ENCODE measurements at regions of chr1 and their contacts with region 1.

Region 1: DNA sequence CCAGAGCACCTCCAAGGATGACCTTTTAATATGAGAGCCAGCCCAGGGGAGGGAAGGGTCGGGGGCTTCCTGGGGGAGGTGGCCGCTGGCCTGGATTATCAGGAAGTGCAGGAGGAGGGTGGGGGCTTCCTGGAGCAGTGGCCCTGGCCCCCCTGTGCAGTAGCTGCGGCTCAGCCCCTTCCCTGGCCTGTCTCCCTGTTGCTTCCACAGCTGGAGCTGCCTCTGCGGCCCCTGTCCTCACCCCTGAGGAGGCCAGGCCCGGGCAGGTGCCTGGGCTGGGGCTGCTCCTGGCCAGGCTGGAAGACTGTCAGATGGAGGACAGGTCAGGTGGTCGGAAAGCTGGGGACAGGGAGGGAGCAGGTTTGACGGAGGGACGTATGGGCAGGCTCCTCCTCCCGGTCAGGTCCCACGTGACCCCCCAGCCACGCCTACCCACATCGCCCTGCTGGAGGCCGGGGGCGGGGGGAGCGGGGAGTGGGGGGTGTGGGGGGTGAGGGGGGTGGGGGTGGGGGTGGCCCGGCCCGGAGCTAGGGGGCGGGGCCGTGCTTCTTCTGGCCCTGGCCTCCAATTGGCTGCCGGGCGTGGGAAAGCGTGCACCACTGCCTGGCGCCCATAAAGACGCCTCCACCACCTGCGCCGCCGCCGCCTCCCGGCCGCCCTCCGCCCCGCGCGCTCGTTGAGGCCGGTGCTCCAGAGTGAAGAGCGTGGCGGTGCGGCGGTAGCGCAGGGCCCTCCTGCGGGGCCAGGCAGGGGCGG is 10.2 kb upstream of the TNFRSF14 start:
- DNase-seq: peak; percentile 91
- H3K4me3 Mint-ChIP-seq: peak overlapping the region; percentile 80
- H3K27ac Mint-ChIP-seq: peak overlapping the region; percentile 99
- H3K4me1 Mint-ChIP-seq: peaks cover 18% of the 10 kb centered on the region
- H3K27me3 Mint-ChIP-seq: no peaks in the 10 kb centered on the region

Region 2: GRCh38 chr1:2300851-2301606 is 244.9 kb before region 1 on chr1:
- CTCF ChIA-PET with region 1: no interaction called
- POLR2A ChIA-PET with region 1: no interaction called
- intact Hi-C with region 1: loop called (anchors 5 kb)
- DNase-seq: peak; percentile 95
- H3K4me3 Mint-ChIP-seq: peak overlapping the region; percentile 75
- H3K27ac Mint-ChIP-seq: peak overlapping the region; percentile 98
- H3K4me1 Mint-ChIP-seq: peaks cover 53% of the 10 kb centered on the region
- H3K27me3 Mint-ChIP-seq: no peaks in the 10 kb centered on the region

Region 3: DNA sequence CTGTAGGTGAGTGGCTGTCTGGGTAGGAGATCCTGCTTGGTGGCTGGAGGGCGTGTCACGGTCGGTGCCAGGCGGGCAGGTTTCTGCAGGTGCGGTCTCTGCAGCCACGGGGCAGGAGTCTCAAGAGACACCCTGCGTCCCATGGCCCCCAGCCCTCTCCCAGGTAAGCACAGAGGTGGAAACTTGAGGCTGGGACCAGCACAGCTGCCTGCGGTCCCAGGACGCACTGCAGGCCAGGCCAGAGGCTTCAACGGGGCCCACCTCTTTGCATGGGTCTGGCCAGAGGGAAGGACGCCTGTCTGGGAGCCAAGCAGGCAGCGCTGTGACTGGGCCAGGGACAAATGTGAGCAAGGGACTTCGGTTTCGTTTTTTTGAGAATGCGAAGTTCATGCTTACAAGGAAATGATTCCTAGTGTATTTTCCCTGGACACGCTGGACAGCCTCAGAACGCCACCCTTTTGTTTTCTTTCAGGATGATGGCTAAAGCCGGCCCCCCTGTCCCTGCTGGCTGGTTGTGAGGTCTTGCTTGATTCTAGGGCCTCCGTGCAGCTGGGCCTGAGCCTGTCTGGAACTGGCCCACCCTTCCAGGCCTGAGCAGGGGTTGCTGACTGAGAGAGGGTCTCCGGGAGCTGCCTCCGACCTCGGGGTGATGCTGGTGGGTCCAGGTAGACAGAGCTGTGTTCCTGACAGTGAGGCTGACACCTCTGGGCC is 192.9 kb before region 1 on chr1:
- CTCF ChIA-PET with region 1: no interaction called
- POLR2A ChIA-PET with region 1: no interaction called
- intact Hi-C with region 1: no loop called
- DNase-seq: no peak
- H3K4me3 Mint-ChIP-seq: no peak overlapping the region
- H3K27ac Mint-ChIP-seq: no peak overlapping the region
- H3K4me1 Mint-ChIP-seq: no peaks in the 10 kb centered on the region
- H3K27me3 Mint-ChIP-seq: no peaks in the 10 kb centered on the region

Region 4: DNA sequence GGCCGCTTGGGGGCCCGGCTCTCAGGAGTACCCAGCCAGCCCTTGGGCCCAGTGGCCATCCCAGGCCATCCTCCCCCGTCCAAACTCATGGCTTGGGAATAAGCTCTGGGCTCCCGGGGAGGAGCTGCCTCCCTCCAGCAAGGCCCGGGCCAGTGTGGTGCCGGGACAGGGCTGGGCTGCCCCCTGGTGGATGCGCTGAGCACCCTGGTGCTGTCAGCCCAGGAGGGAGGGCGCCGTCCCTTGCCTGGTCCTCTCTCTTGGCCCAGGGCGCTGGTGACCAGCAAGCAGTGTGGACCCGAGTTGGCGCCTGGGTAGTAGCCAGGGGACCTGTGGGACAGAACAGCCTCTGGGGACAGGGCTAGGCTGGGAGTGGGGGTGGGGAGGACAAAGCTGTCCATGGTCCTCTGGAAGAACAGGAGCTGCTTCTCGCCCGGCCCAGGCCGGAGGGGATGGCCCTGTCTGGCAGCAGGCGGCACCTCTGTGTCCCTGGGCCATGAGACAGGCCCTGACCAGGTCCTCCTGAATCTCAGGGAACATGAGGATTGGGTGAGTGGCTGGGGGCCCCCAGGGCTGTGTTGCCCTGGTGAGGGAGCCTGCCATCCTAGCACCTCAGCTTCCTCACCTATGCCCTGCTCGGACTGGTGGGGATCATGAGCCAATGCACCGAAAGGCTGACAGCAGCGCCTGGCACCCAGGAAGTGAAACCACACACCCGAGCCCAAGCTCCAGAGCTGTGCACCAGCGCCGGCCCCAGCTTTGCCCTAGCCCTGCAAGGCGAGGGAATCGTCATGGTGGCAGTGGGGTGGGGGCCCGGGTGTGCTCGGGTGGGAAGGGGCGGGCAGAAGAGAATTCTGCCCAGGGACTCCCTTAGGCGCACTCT is 164.0 kb before region 1 on chr1:
- CTCF ChIA-PET with region 1: no interaction called
- POLR2A ChIA-PET with region 1: no interaction called
- intact Hi-C with region 1: no loop called
- DNase-seq: peak; percentile 85
- H3K4me3 Mint-ChIP-seq: no peak overlapping the region
- H3K27ac Mint-ChIP-seq: no peak overlapping the region
- H3K4me1 Mint-ChIP-seq: no peaks in the 10 kb centered on the region
- H3K27me3 Mint-ChIP-seq: no peaks in the 10 kb centered on the region

Region 5: DNA sequence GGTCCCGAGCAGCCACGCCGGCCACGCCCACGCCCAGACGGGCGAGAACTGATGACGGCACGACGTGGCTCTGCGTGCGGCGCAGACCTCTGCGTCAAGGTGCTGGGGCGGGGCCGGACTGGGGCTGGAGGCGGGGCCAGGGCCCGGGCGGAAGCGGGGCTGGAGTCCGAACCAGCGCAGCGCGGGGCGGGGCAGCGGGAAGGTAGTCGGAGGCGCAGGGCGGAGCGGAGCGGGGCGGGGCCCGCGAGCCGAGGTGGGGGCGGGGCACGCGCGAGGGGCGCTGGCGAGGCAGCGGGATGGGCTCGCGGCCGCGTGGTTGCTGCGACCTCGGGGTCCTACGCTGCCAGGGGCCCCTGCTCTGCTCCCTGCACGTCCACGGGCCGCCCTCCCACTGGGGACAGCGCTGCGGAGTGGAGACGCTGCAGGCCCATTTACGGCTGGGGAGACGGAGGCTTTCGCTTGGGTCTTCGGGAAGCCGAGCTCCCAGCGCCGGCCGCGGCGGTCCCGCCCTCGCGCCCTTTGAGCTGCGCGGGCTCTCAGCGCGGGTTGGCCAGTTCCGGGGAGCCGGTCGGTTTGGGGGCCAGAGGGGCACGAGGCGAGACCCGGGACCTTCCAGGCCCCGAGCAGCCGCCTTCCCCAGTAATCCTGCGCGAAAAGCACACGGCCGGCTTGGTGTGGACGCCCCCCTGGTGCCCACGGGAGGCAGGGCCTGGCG is 133.3 kb before region 1 on chr1 and contains the start of gene PEX10:
- CTCF ChIA-PET with region 1: interaction called, 43 read pairs
- POLR2A ChIA-PET with region 1: interaction called, 5 read pairs
- intact Hi-C with region 1: loop called (anchors 1 kb)
- DNase-seq: peak; percentile 99
- H3K4me3 Mint-ChIP-seq: peak within 1 kb of the TSS; percentile 88
- H3K27ac Mint-ChIP-seq: peak within 1 kb of the TSS; percentile 82
- H3K4me1 Mint-ChIP-seq: peaks cover 34% of the 10 kb centered on the region
- H3K27me3 Mint-ChIP-seq: no peaks in the 10 kb centered on the region
- total RNA-seq, gene PEX10: 14.8 to 15.4 TPM

Region 6: GRCh38 chr1:2474933-2475371 is 71.0 kb before region 1 on chr1:
- CTCF ChIA-PET with region 1: no interaction called
- POLR2A ChIA-PET with region 1: no interaction called
- intact Hi-C with region 1: no loop called
- DNase-seq: no peak
- H3K4me3 Mint-ChIP-seq: no peak overlapping the region
- H3K27ac Mint-ChIP-seq: no peak overlapping the region
- H3K4me1 Mint-ChIP-seq: no peaks in the 10 kb centered on the region
- H3K27me3 Mint-ChIP-seq: no peaks in the 10 kb centered on the region

Region 7: GRCh38 chr1:2556277-2556677 is 10.3 kb after region 1 on chr1 and contains the start of gene TNFRSF14:
- CTCF ChIA-PET with region 1: interaction called, 17 read pairs
- POLR2A ChIA-PET with region 1: interaction called, 28 read pairs
- intact Hi-C with region 1: loop called (anchors 1 kb)
- DNase-seq: peak; percentile 81
- H3K4me3 Mint-ChIP-seq: peak within 1 kb of the TSS; percentile 99
- H3K27ac Mint-ChIP-seq: peak within 1 kb of the TSS; percentile 99
- H3K4me1 Mint-ChIP-seq: peaks cover 31% of the 10 kb centered on the region
- H3K27me3 Mint-ChIP-seq: no peaks in the 10 kb centered on the region
- total RNA-seq, gene TNFRSF14: 145 to 152 TPM

Region 8: GRCh38 chr1:2586154-2587070 is 40.5 kb after region 1 on chr1 and contains the start of gene PRXL2B:
- CTCF ChIA-PET with region 1: interaction called, 34 read pairs
- POLR2A ChIA-PET with region 1: interaction called, 65 read pairs
- intact Hi-C with region 1: loop called (anchors 1 kb)
- DNase-seq: peak; percentile 99
- H3K4me3 Mint-ChIP-seq: peak within 1 kb of the TSS; percentile 83
- H3K27ac Mint-ChIP-seq: peak within 1 kb of the TSS; percentile 92
- H3K4me1 Mint-ChIP-seq: peaks cover 39% of the 10 kb centered on the region
- H3K27me3 Mint-ChIP-seq: no peaks in the 10 kb centered on the region
- total RNA-seq, gene PRXL2B: 28.2 to 34.6 TPM

Measured in activated CD4-positive, alpha-beta memory T cell treated with anti-CD3 and anti-CD28 coated beads for 36 hours (primary cell).